PC-3 (cell line): ENCODE measurements at regions of chr11 and their contacts with region 1.

Region 1: DNA sequence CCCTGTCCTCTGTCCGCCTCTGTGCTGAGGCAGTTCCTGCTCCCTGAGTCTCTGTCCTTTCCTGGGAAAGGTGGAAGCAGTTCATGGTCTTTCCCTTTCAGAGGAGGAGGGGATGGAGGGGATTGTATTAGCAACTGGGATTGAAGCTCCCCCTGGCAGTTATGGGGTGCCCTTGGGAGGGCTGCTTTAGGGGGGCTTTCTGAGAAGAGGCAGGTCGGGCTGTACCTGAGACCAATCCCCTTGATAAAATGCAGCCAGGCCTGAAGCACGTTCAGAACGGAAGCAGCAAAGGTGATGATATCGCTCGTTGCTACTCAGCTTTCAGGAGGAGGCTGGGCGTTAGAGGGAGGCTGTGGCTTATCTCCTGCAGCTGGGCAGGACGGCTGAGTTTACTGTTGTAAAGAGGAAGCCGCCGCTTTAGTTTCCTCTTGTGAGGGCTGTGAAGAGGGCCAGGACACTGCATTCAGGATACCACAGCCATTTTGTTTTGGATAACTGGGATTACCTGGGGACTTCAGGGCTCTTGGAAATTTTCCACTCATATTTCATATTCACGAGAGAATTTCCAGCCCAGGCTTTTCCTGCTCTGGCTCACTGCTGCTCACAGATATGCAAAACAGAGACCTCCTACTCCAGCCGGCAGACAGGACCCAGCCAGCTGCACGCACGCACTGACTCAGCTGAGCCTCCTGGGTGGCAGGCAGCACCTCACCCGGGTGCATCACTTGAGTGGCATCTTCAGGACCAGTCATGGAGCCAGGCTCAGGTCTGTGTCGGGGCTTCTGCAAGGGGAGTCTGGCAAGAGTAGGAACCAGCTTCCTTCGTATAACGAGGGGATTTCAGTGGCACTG is 798 bp downstream of the AMPD3 start:
- DNase-seq: peak; percentile 70
- ATAC-seq: peak; percentile 49
- H3K4me3 ChIP-seq: peak overlapping the region; percentile 74
- H3K27ac ChIP-seq: peak overlapping the region; percentile 96
- H3K4me1 ChIP-seq: peaks cover 50% of the 10 kb centered on the region
- H3K27me3 ChIP-seq: no peaks in the 10 kb centered on the region
- CTCF ChIP-seq: no peak

Region 2: DNA sequence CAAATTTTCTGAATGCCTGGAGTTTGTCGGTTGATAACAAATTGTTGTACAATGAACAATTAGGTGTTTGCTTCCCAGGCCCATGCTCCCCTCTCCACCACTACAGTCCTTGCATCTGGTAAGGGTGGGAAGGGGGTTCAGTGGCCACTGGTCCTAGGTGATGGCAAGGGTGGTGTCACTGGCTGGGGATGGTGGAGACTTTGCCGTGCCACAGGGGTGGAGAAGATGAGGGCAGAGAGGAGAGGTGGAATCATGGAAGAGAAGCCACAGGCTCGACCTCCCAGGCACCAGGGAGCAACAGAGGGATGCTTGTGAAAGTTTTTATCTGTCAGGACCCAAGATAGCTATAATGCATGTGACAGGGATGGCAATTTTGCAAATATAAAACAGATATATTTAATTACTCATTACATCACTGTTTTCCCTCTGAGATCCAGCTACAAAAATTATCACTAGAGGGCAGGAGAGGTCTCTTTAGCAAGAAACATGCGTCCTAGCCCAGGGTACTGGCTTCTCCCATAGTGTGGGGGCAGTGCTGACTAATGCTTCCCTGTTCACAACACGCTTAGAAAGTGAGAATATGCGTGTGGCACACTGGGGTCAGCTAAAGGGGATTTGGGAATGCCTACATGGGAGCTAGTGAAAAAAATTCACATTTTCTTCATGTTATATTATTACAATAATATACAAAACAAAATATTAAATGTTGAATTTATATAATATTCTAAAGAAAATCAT is 49.8 kb before region 1 on chr11:
- CTCF ChIA-PET with region 1: interaction called, 3 read pairs
- POLR2A ChIA-PET with region 1: no interaction called
- intact Hi-C with region 1: loop called (anchors 2 kb)
- DNase-seq: peak; percentile 87
- ATAC-seq: peak; percentile 41
- H3K4me3 ChIP-seq: no peak overlapping the region
- H3K27ac ChIP-seq: no peak overlapping the region
- H3K4me1 ChIP-seq: peaks cover 21% of the 10 kb centered on the region
- H3K27me3 ChIP-seq: no peaks in the 10 kb centered on the region
- CTCF ChIP-seq: peak; percentile 70

Region 3: GRCh38 chr11:10413268-10413667 is 42.6 kb before region 1 on chr11:
- CTCF ChIA-PET with region 1: interaction called, 10 read pairs
- POLR2A ChIA-PET with region 1: no interaction called
- intact Hi-C with region 1: no loop called
- DNase-seq: peak; percentile 62
- ATAC-seq: peak; percentile 96
- H3K4me3 ChIP-seq: no peak overlapping the region
- H3K27ac ChIP-seq: no peak overlapping the region
- H3K4me1 ChIP-seq: 0 out of 2 replicates have a peak, but pooled peaks cover 4% of the 10 kb centered on the region
- H3K27me3 ChIP-seq: no peaks in the 10 kb centered on the region
- CTCF ChIP-seq: peak; percentile 57

Region 4: GRCh38 chr11:10432493-10432892 is 23.4 kb before region 1 on chr11:
- CTCF ChIA-PET with region 1: no interaction called
- POLR2A ChIA-PET with region 1: interaction called, 4 read pairs
- intact Hi-C with region 1: loop called (anchors 2 kb)
- DNase-seq: peak; percentile 8
- ATAC-seq: peak; percentile 55
- H3K4me3 ChIP-seq: peak overlapping the region; percentile 35; the same call in 1 of the 2 replicates
- H3K27ac ChIP-seq: peak overlapping the region; percentile 39
- H3K4me1 ChIP-seq: peaks cover 29% of the 10 kb centered on the region
- H3K27me3 ChIP-seq: no peaks in the 10 kb centered on the region
- CTCF ChIP-seq: no peak

Region 5: GRCh38 chr11:10490398-10491241 is 34.8 kb after region 1 on chr11:
- CTCF ChIA-PET with region 1: interaction called, 6 read pairs
- POLR2A ChIA-PET with region 1: interaction called, 8 read pairs
- intact Hi-C with region 1: loop called (anchors 1 kb)
- DNase-seq: peak; percentile 97
- ATAC-seq: peak; percentile 82
- H3K4me3 ChIP-seq: no peak overlapping the region
- H3K27ac ChIP-seq: peak overlapping the region; percentile 79
- H3K4me1 ChIP-seq: peaks cover 43% of the 10 kb centered on the region
- H3K27me3 ChIP-seq: no peaks in the 10 kb centered on the region
- CTCF ChIP-seq: no peak